WTC11 (cell line): ENCODE measurements at regions of chr9 and their contacts with region 1.

Region 1: GRCh38 chr9:101311758-101312420 is 72.9 kb downstream of the BAAT start:
- DNase-seq: no peak
- ATAC-seq: peak; percentile 78
- H3K4me3 Mint-ChIP-seq: no peak overlapping the region
- H3K27ac Mint-ChIP-seq: no peak overlapping the region
- H3K4me1 Mint-ChIP-seq: peaks cover 2% of the 10 kb centered on the region; the same call in 1 of the 2 replicates
- H3K27me3 Mint-ChIP-seq: no peaks in the 10 kb centered on the region; the same call in 1 of the 2 replicates
- CTCF ChIP-seq: peak; percentile 76

Region 2: GRCh38 chr9:100700689-100701318 is 611.1 kb before region 1 on chr9:
- CTCF ChIA-PET with region 1: interaction called, 13 read pairs
- POLR2A ChIA-PET with region 1: no interaction called
- DNase-seq: peak; percentile 44
- ATAC-seq: peak; percentile 96
- H3K4me3 Mint-ChIP-seq: no peak overlapping the region
- H3K27ac Mint-ChIP-seq: no peak overlapping the region
- H3K4me1 Mint-ChIP-seq: peaks cover 11% of the 10 kb centered on the region
- H3K27me3 Mint-ChIP-seq: no peaks in the 10 kb centered on the region
- CTCF ChIP-seq: peak; percentile 48

Region 3: GRCh38 chr9:101235105-101235866 is 76.6 kb before region 1 on chr9:
- CTCF ChIA-PET with region 1: interaction called, 16 read pairs
- POLR2A ChIA-PET with region 1: no interaction called
- DNase-seq: no peak
- ATAC-seq: peak; percentile 89
- H3K4me3 Mint-ChIP-seq: no peak overlapping the region
- H3K27ac Mint-ChIP-seq: peak overlapping the region; percentile 35
- H3K4me1 Mint-ChIP-seq: peaks cover 47% of the 10 kb centered on the region
- H3K27me3 Mint-ChIP-seq: no peaks in the 10 kb centered on the region
- CTCF ChIP-seq: peak; percentile 32; the same call in 1 of the 2 replicates

Region 4: GRCh38 chr9:101265261-101265660 is 46.6 kb before region 1 on chr9:
- CTCF ChIA-PET with region 1: interaction called, 11 read pairs
- POLR2A ChIA-PET with region 1: no interaction called
- DNase-seq: no peak
- ATAC-seq: no peak
- H3K4me3 Mint-ChIP-seq: no peak overlapping the region
- H3K27ac Mint-ChIP-seq: no peak overlapping the region
- H3K4me1 Mint-ChIP-seq: peaks cover 21% of the 10 kb centered on the region
- H3K27me3 Mint-ChIP-seq: no peaks in the 10 kb centered on the region
- CTCF ChIP-seq: no peak

Region 5: DNA sequence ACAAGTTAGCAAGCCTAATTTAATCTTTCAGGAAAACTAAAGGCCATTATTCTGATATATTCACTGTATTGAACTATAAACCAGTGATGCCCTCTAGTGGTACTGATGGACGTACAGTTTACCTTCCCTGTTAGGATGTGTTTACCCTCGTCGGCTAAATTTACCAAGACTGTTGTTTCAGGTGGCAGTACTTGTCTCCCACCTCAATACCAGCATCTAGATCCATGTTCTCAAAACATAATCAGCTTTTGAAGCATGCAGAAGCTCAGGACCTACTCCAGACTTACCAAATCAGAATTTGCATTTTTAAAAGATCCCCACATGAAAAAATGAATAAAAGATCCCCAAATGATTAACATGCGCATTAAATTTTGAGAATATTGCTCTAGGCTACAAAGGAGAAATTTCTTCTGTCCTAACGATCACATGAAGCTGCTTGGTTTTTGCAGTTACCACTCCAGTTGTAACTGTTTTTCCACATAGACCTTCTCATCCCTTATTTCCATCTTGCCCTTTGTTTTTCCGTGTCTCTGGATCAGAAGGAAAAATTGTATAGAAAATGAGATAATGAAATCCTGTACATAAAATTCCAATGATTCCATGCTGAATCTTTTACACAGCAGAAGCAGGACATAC is 76.1 kb after region 1 on chr9:
- CTCF ChIA-PET with region 1: interaction called, 23 read pairs
- POLR2A ChIA-PET with region 1: no interaction called
- DNase-seq: no peak
- ATAC-seq: peak; percentile 94
- H3K4me3 Mint-ChIP-seq: no peak overlapping the region
- H3K27ac Mint-ChIP-seq: peak overlapping the region; percentile 93
- H3K4me1 Mint-ChIP-seq: peaks cover 28% of the 10 kb centered on the region
- H3K27me3 Mint-ChIP-seq: no peaks in the 10 kb centered on the region
- CTCF ChIP-seq: peak; percentile 32